Endothelial cell of umbilical vein (primary cell): ENCODE measurements at regions of chr20 and their contacts with region 1.

Region 1: DNA sequence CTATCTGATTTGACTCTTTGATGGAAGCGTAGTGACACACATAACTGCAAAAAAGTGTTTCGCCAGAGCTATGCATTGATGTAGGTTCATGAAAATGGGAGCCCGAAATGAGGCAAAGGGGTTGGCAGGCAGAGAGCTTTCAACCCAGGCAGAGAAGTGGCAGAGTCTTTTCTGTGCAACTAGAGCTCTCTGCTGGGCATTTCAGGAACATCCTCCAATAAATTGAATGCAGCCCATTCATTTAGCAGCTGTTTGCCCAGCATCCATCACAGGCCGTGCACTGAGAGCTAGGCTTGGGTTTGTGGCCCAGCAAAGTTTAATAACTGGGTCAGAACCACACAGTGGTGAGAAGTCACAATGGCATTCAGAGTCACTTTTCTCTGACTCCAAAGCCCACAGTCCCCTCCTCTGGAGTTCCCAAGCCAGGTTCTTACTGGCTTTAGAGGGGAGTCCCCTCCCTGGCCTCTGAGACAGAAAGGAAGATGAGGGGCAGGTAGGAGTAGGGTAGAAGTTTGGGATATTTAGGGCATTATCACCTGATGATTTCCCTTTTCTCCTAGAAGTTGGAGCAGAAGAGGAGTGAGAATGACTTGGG is 31.8 kb upstream of the ELMO2 start:
- DNase-seq: peak; percentile 15
- H3K4me3 ChIP-seq: no peak overlapping the region
- H3K27ac ChIP-seq: no peak overlapping the region
- H3K4me1 ChIP-seq: no peaks in the 10 kb centered on the region
- H3K27me3 ChIP-seq: peaks cover 0 to 2% of the 10 kb centered on the region in 2 experiments
- CTCF ChIP-seq: peak in 1 of 2 donors; percentile 30
- POLR2A ChIP-seq: no peak

Region 2: GRCh38 chr20:46022411-46023147 is 415.7 kb before region 1 on chr20:
- CTCF ChIA-PET with region 1: interaction called, 11 read pairs
- POLR2A ChIA-PET with region 1: no interaction called
- dilution Hi-C with region 1: no loop called
- intact Hi-C with region 1: no loop called
- DNase-seq: no peak
- H3K4me3 ChIP-seq: no peak overlapping the region
- H3K27ac ChIP-seq: no peak overlapping the region
- H3K4me1 ChIP-seq: no peaks in the 10 kb centered on the region
- H3K27me3 ChIP-seq: peaks cover 10 to 22% of the 10 kb centered on the region in 2 experiments
- CTCF ChIP-seq: peak; percentile 53 to 77
- POLR2A ChIP-seq: no peak

Region 3: GRCh38 chr20:46363800-46364634 is 74.2 kb before region 1 on chr20:
- CTCF ChIA-PET with region 1: no interaction called
- POLR2A ChIA-PET with region 1: no interaction called
- dilution Hi-C with region 1: no loop called
- intact Hi-C with region 1: no loop called
- DNase-seq: peak; percentile 88
- H3K4me3 ChIP-seq: peak overlapping the region; percentile 49 to 90 (median 67)
- H3K27ac ChIP-seq: peak overlapping the region; percentile 94
- H3K4me1 ChIP-seq: peaks cover 8% of the 10 kb centered on the region
- H3K27me3 ChIP-seq: no peaks in the 10 kb centered on the region
- CTCF ChIP-seq: no peak
- POLR2A ChIP-seq: peak; percentile 68